Caco-2 (cell line): ENCODE measurements at regions of chr9 and their contacts with region 1.

Region 1: GRCh38 chr9:71001780-71002386 is 119.5 kb downstream of the TRPM3 start:
- DNase-seq: peak; percentile 9 to 18
- H3K4me3 ChIP-seq: no peak overlapping the region
- H3K4me3 Mint-ChIP-seq: no peak overlapping the region
- H3K27ac Mint-ChIP-seq: no peak overlapping the region
- H3K4me1 ChIP-seq: no peaks in the 10 kb centered on the region
- H3K4me1 Mint-ChIP-seq: no peaks in the 10 kb centered on the region
- H3K27me3 ChIP-seq: no peaks in the 10 kb centered on the region
- H3K27me3 Mint-ChIP-seq: no peaks in the 10 kb centered on the region
- CTCF ChIP-seq: peak; percentile 15 to 22

Region 2: GRCh38 chr9:70924895-70925547 is 76.9 kb before region 1 on chr9:
- CTCF ChIA-PET with region 1: interaction called, 5 read pairs
- POLR2A ChIA-PET with region 1: no interaction called
- intact Hi-C with region 1: loop called (anchors 1 kb)
- DNase-seq: peak; percentile 13 to 19
- H3K4me3 ChIP-seq: no peak overlapping the region
- H3K4me3 Mint-ChIP-seq: no peak overlapping the region
- H3K27ac Mint-ChIP-seq: no peak overlapping the region
- H3K4me1 ChIP-seq: no peaks in the 10 kb centered on the region
- H3K4me1 Mint-ChIP-seq: no peaks in the 10 kb centered on the region
- H3K27me3 ChIP-seq: no peaks in the 10 kb centered on the region
- H3K27me3 Mint-ChIP-seq: no peaks in the 10 kb centered on the region
- CTCF ChIP-seq: peak in 1 of 2 experiments; percentile 38

Region 3: DNA sequence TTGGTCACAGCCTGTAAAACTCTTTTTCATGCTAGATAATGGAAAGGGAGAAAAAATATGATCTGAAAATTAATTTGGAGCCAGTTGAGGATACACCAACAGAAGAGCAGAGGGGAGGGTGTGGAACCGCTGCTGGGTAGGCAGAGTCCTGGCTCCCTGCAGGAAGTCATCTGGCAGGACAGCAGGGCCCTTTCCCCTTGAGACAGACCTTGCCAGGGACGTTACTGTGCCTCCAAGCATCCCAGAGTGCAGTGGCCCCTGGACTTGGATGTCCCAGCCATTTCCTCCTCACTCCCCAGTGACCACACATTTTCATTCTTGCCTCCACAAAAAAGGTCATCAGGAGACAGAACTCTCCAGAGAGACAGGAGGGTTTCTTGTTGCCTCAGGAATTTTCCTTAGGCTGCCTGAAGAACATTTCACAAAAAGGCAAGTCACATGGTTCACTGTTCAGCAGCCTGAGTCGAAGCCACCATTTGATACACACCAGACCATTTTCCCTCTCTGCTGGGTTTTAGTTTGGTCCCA is 113.6 kb after region 1 on chr9:
- CTCF ChIA-PET with region 1: no interaction called
- POLR2A ChIA-PET with region 1: no interaction called
- intact Hi-C with region 1: no loop called
- DNase-seq: no peak
- H3K4me3 ChIP-seq: no peak overlapping the region
- H3K4me3 Mint-ChIP-seq: no peak overlapping the region
- H3K27ac Mint-ChIP-seq: no peak overlapping the region
- H3K4me1 ChIP-seq: no peaks in the 10 kb centered on the region
- H3K4me1 Mint-ChIP-seq: no peaks in the 10 kb centered on the region
- H3K27me3 ChIP-seq: no peaks in the 10 kb centered on the region
- H3K27me3 Mint-ChIP-seq: no peaks in the 10 kb centered on the region
- CTCF ChIP-seq: no peak